PC-3 (cell line): ENCODE measurements at regions of chr2 and their contacts with region 1.

Region 1: GRCh38 chr2:38581193-38582147 is 21.3 kb downstream of the HNRNPLL start:
- DNase-seq: peak; percentile 86
- ATAC-seq: peak; percentile 74
- H3K4me3 ChIP-seq: no peak overlapping the region
- H3K27ac ChIP-seq: no peak overlapping the region
- H3K4me1 ChIP-seq: peaks cover 16% of the 10 kb centered on the region
- H3K27me3 ChIP-seq: no peaks in the 10 kb centered on the region
- CTCF ChIP-seq: peak; percentile 82

Region 2: GRCh38 chr2:38125842-38126241 is 455.6 kb before region 1 on chr2:
- CTCF ChIA-PET with region 1: no interaction called
- POLR2A ChIA-PET with region 1: interaction called, 12 read pairs
- intact Hi-C with region 1: no loop called
- DNase-seq: no peak
- ATAC-seq: no peak
- H3K4me3 ChIP-seq: no peak overlapping the region
- H3K27ac ChIP-seq: no peak overlapping the region
- H3K4me1 ChIP-seq: no peaks in the 10 kb centered on the region
- H3K27me3 ChIP-seq: no peaks in the 10 kb centered on the region
- CTCF ChIP-seq: no peak

Region 3: GRCh38 chr2:38602732-38603401 is 21.4 kb after region 1 on chr2 and contains the start of gene HNRNPLL:
- CTCF ChIA-PET with region 1: interaction called, 13 read pairs
- POLR2A ChIA-PET with region 1: no interaction called
- intact Hi-C with region 1: loop called (anchors 1 kb)
- DNase-seq: peak; percentile 98
- ATAC-seq: peak; percentile 81
- H3K4me3 ChIP-seq: peak within 1 kb of the TSS; percentile 84
- H3K27ac ChIP-seq: peak within 1 kb of the TSS; percentile 62
- H3K4me1 ChIP-seq: peaks cover 37% of the 10 kb centered on the region
- H3K27me3 ChIP-seq: no peaks in the 10 kb centered on the region
- CTCF ChIP-seq: no peak
- total RNA-seq, gene HNRNPLL: 30.1 and 43.8 TPM in 2 replicates

Region 4: GRCh38 chr2:38720613-38721241 is 139.3 kb after region 1 on chr2:
- CTCF ChIA-PET with region 1: interaction called, 15 read pairs
- POLR2A ChIA-PET with region 1: no interaction called
- intact Hi-C with region 1: no loop called
- DNase-seq: peak; percentile 95
- ATAC-seq: peak; percentile 89
- H3K4me3 ChIP-seq: no peak overlapping the region
- H3K27ac ChIP-seq: peak overlapping the region; percentile 38
- H3K4me1 ChIP-seq: peaks cover 27% of the 10 kb centered on the region
- H3K27me3 ChIP-seq: no peaks in the 10 kb centered on the region
- CTCF ChIP-seq: no peak